Activated CD4-positive, alpha-beta T cell treated with anti-CD3 and anti-CD28 coated beads for 36 hours (primary cell): ENCODE measurements at regions of chr1 and their contacts with region 1.

Region 1: GRCh38 chr1:35930593-35931445 is at the start of gene AGO3:
- DNase-seq: peak; percentile 95
- ATAC-seq: peak; percentile 95
- H3K4me3 Mint-ChIP-seq: peak within 1 kb of the TSS; percentile 92
- H3K27ac Mint-ChIP-seq: peak within 1 kb of the TSS; percentile 94
- H3K4me1 Mint-ChIP-seq: peaks cover 37% of the 10 kb centered on the region
- H3K27me3 Mint-ChIP-seq: no peaks in the 10 kb centered on the region
- total RNA-seq, gene AGO3: 23.3 to 33.8 TPM

Region 2: GRCh38 chr1:35807614-35808449 is 123.0 kb before region 1 on chr1 and contains the start of gene AGO4:
- CTCF ChIA-PET with region 1: no interaction called
- POLR2A ChIA-PET with region 1: no interaction called
- intact Hi-C with region 1: loop called in 1 of 2 experiments (anchors 5 kb)
- DNase-seq: peak; percentile 56
- ATAC-seq: peak; percentile 31
- H3K4me3 Mint-ChIP-seq: peak within 1 kb of the TSS; percentile 82
- H3K27ac Mint-ChIP-seq: peak within 1 kb of the TSS; percentile 87
- H3K4me1 Mint-ChIP-seq: peaks cover 31% of the 10 kb centered on the region
- H3K27me3 Mint-ChIP-seq: no peaks in the 10 kb centered on the region
- total RNA-seq, gene AGO4: 4.1 to 10.1 TPM

Region 3: GRCh38 chr1:36023098-36023769 is 92.4 kb after region 1 on chr1:
- CTCF ChIA-PET with region 1: no interaction called
- POLR2A ChIA-PET with region 1: no interaction called
- intact Hi-C with region 1: loop called in 1 of 2 experiments (anchors 1 kb)
- DNase-seq: peak; percentile 10
- ATAC-seq: peak; percentile 92
- H3K4me3 Mint-ChIP-seq: no peak overlapping the region
- H3K27ac Mint-ChIP-seq: peak overlapping the region; percentile 92
- H3K4me1 Mint-ChIP-seq: peaks cover 16% of the 10 kb centered on the region
- H3K27me3 Mint-ChIP-seq: no peaks in the 10 kb centered on the region

Region 4: DNA sequence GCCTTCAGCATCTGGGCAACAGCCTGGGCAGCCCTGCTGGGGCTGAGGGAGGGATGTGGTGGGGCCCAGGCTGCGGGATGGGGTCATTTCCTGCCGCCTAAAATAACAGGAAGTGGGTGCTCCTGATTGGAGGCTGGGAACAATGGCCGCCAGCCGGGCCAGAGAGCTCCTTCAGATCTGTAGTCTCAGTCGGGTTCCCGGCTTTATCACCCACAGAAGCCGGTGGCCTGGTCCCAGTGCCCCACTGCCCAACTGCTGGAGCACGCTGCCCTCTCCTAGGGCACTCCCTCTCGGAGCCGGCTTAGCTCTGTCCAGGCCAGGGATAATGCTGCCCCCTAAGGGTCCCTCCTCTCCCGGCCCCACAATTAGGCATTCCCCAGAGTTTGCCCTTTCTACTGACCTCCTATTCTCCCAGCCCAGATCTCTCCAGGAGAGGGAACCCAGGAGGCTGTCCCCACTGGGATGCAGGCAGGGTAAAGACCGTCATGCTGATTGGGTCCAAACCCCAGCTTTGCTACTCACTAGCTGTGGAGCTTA is 230.2 kb after region 1 on chr1:
- CTCF ChIA-PET with region 1: no interaction called
- POLR2A ChIA-PET with region 1: no interaction called
- intact Hi-C with region 1: loop called in 1 of 2 experiments (anchors 1 kb)
- DNase-seq: peak; percentile 86
- ATAC-seq: peak; percentile 59
- H3K4me3 Mint-ChIP-seq: peak overlapping the region; percentile 76
- H3K27ac Mint-ChIP-seq: peak overlapping the region; percentile 94
- H3K4me1 Mint-ChIP-seq: peaks cover 62% of the 10 kb centered on the region
- H3K27me3 Mint-ChIP-seq: no peaks in the 10 kb centered on the region

Region 5: GRCh38 chr1:36463803-36464604 is 533.2 kb after region 1 on chr1 and contains the start of gene MRPS15:
- CTCF ChIA-PET with region 1: no interaction called
- POLR2A ChIA-PET with region 1: no interaction called
- intact Hi-C with region 1: loop called in 1 of 2 experiments (anchors 1 kb)
- DNase-seq: peak; percentile 98
- ATAC-seq: peak; percentile 94
- H3K4me3 Mint-ChIP-seq: peak within 1 kb of the TSS; percentile 97
- H3K27ac Mint-ChIP-seq: peak within 1 kb of the TSS; percentile 97
- H3K4me1 Mint-ChIP-seq: peaks cover 31% of the 10 kb centered on the region
- H3K27me3 Mint-ChIP-seq: no peaks in the 10 kb centered on the region
- total RNA-seq, gene MRPS15: 123 to 169 TPM